Activated T-helper 1 cell treated with anti-CD3 and anti-CD28 coated beads, Interleukin-12 subunit alpha, Interleukin-12 subunit beta, Interleukin-2, Interleukin-4 antibody, amounts not matched to agents 30 ng/mL and 10 ng/mL and 1 ng/mL, durations not matched to agents 14 hours and 24 hours and 36 hours (primary cell): ENCODE measurements at regions of chr9 and their contacts with region 1.

Region 1: GRCh38 chr9:125241000-125241862 is at the start of gene HSPA5:
- DNase-seq: peak; percentile 99
- H3K4me3 Mint-ChIP-seq: peak within 1 kb of the TSS; percentile 96
- H3K27ac Mint-ChIP-seq: peak within 1 kb of the TSS; percentile 96
- H3K4me1 Mint-ChIP-seq: peaks cover 36% of the 10 kb centered on the region
- H3K27me3 Mint-ChIP-seq: no peaks in the 10 kb centered on the region
- total RNA-seq, gene HSPA5: 242 and 243 TPM in 2 replicates

Region 2: GRCh38 chr9:124868511-124869465 is 372.4 kb before region 1 on chr9:
- intact Hi-C with region 1: loop called (anchors 1 kb)
- DNase-seq: peak; percentile 93
- H3K4me3 Mint-ChIP-seq: peak overlapping the region; percentile 99
- H3K27ac Mint-ChIP-seq: peak overlapping the region; percentile 100
- H3K4me1 Mint-ChIP-seq: peaks cover 56% of the 10 kb centered on the region
- H3K27me3 Mint-ChIP-seq: peaks cover 1% of the 10 kb centered on the region

Region 3: DNA sequence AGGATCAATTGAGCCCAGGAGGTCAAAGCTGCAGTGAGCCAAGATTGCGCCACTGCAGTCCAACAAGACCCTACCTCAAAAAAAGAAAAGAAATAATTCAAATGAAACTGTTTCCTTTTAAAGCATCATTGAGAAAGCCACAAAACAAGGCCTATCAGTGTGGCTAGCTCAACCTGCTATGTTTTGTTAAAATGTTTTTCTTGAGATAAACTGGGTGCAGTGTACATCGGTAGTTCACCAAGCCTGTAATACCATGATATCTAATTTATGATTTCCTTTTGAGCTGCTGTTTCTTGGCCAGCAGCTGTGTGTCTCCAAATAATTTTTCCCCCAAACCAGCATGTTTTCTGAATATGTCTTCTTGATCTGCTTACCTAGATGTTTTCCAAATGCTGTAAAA is 203.1 kb before region 1 on chr9:
- intact Hi-C with region 1: no loop called
- DNase-seq: no peak
- H3K4me3 Mint-ChIP-seq: no peak overlapping the region
- H3K27ac Mint-ChIP-seq: no peak overlapping the region
- H3K4me1 Mint-ChIP-seq: no peaks in the 10 kb centered on the region
- H3K27me3 Mint-ChIP-seq: no peaks in the 10 kb centered on the region

Region 4: DNA sequence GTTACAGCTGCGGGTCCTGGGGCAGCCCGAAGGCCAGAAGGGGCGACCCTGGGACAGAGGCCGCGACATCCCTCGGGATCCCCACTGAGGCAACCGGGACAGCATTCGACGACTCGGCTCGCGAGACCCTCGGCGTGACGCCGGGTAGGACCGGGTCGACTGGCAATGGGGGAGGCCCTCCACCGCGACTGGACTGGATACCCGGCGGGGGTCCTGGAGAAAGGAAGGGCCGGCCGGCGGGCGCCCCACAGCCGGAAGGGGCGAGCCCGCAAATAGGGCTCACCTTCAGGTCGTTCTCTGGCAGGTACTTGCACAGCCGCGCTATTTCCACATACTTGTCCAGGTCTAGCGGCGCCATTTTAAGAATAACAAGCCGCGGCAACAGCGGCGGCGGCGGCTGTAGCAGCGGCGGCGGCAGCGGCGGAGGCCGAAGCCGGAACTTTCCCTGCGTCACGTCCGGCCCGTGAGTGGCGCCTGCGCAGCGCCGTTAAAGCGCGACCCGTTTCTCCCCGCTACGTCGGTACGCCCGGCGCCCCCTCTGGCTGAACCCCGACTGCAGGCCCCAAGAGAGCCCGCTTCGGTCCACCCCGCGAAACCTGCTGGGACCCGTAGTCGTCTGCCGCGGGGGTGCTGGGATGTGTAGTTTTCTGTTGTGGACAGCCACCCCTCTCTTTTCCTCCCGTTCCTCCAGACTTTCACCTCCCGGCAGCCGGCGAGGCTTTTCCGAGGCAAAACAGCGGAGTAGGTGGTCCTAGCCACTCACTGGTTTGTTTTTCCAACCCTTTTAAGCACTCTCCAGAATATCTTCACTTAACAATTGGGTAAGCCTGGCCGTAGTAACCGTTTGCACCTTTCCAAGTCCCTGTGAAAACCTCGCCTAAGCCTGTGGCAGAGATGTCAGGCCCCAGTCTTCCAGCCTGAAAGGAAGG is 51.6 kb before region 1 on chr9 and contains the start of gene PPP6C:
- intact Hi-C with region 1: loop called (anchors 1 kb)
- DNase-seq: peak; percentile 96
- H3K4me3 Mint-ChIP-seq: peak within 1 kb of the TSS; percentile 96
- H3K27ac Mint-ChIP-seq: peak within 1 kb of the TSS; percentile 88
- H3K4me1 Mint-ChIP-seq: peaks cover 33% of the 10 kb centered on the region
- H3K27me3 Mint-ChIP-seq: no peaks in the 10 kb centered on the region
- total RNA-seq, gene PPP6C: 47.2 and 50.8 TPM in 2 replicates

Region 5: DNA sequence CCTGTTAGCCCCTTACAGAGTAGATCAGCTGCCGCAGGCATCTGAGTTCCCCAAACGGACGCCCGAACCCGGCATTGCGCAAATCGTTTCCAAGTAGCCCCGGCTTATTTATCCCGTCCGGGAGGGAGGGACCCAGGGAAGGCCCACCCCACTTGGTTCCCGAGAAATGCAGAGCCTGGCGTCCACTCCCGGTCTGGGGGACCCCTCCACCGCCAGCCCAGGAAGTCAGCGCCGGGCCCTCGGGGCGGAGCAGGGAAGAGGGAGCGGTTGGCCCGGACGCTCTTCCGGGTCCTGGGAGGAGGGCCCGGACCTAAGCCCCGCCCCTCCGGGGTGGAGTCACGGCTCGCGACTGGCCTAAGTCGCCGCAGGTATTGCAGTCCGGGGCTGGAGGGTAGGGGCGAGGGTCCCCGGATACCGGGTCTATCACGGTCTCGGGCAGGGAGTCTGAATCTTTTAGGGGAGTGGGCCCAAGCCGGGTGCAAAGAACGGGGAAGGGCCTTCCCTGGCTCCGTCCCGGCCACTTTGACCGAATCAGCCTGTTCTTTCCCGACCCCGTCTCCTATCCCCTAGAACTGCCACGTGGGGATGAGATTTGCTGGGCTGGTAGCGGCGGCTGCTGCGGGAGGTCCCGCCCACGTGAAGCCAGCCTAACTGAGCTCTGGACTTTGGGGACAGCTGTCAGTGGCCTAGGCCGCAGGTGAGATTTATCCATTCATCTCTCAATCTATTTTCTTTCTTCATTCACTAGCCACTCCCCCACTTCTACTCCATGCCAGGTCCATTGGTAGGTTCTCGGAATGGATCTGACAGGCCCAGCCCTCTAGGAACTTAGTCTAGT is 40.8 kb before region 1 on chr9 and contains the start of gene RABEPK:
- intact Hi-C with region 1: loop called (anchors 1 kb)
- DNase-seq: peak; percentile 90
- H3K4me3 Mint-ChIP-seq: peak within 1 kb of the TSS; percentile 95
- H3K27ac Mint-ChIP-seq: peak within 1 kb of the TSS; percentile 89
- H3K4me1 Mint-ChIP-seq: peaks cover 21% of the 10 kb centered on the region
- H3K27me3 Mint-ChIP-seq: peaks cover 2% of the 10 kb centered on the region
- total RNA-seq, gene RABEPK: 32.8 and 33.1 TPM in 2 replicates

Region 6: DNA sequence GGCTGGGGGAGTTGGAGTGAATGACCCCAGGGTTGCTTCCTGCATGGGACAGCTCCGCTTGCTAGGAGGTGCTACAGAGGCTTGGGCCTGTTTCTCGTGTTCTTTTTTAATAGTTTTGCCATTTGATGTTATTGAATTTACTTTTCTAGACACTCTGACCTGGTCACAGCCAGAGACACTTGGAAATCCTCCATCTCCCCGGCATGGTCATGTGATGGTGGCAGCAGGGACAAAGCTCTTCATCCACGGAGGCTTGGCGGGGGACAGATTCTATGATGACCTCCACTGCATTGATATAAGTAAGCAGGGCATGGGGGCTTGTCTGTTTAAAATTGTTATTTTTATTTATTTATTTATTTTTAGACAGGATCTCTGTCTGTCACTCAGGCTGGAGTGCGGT is 13.5 kb before region 1 on chr9:
- intact Hi-C with region 1: no loop called
- DNase-seq: no peak
- H3K4me3 Mint-ChIP-seq: no peak overlapping the region
- H3K27ac Mint-ChIP-seq: no peak overlapping the region
- H3K4me1 Mint-ChIP-seq: no peaks in the 10 kb centered on the region
- H3K27me3 Mint-ChIP-seq: no peaks in the 10 kb centered on the region

Region 7: DNA sequence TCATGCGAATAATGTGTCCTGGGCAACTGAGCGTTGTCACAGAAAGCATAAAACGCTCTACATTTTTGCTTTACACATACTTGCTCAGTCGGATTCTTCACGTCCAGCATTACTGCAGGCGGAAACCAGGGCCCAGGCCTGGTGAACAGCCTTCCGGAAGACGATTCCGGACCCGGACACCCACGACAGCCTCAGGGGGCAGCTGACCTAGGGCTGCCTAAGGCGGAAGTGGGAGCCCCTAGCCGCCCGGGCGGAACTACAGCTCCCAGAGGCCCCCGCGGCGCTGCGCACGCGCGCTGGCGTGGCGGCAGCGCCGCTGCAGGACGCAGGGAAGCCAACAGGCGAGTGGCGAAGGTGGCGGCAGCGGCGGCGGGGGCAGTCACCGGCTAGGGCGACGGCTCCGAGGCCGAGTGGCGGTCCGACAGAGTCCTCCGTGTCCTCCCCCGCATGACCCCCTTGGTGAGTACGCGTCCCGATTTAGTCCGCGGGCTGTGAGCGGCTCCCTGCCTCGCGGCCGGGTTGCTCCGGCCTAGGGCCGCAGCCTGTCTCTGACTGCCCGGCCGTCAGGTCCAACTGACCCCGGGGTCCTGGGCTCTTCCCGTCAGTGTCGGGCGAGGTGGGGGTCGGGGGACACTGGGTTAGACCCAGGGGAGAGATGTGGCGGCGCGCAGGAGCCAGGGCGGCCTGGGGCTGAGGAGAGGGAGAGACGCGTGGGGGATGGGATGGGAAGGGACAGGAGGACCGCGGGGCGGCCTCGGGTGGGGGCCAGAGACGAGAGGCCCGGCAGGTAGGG is 20.5 kb after region 1 on chr9 and contains the start of gene GAPVD1:
- intact Hi-C with region 1: loop called (anchors 1 kb)
- DNase-seq: peak; percentile 88
- H3K4me3 Mint-ChIP-seq: peak within 1 kb of the TSS; percentile 99
- H3K27ac Mint-ChIP-seq: peak within 1 kb of the TSS; percentile 93
- H3K4me1 Mint-ChIP-seq: peaks cover 42% of the 10 kb centered on the region
- H3K27me3 Mint-ChIP-seq: no peaks in the 10 kb centered on the region
- total RNA-seq, gene GAPVD1: 53.6 and 56.8 TPM in 2 replicates

Region 8: GRCh38 chr9:125374443-125375309 is 133.4 kb after region 1 on chr9:
- intact Hi-C with region 1: loop called (anchors 1 kb)
- DNase-seq: peak; percentile 62
- H3K4me3 Mint-ChIP-seq: peak overlapping the region; percentile 45
- H3K27ac Mint-ChIP-seq: no peak overlapping the region
- H3K4me1 Mint-ChIP-seq: no peaks in the 10 kb centered on the region
- H3K27me3 Mint-ChIP-seq: peaks cover 6% of the 10 kb centered on the region